AG04450 (cell line): ENCODE measurements at regions of chr7 and their contacts with region 1.

Region 1: DNA sequence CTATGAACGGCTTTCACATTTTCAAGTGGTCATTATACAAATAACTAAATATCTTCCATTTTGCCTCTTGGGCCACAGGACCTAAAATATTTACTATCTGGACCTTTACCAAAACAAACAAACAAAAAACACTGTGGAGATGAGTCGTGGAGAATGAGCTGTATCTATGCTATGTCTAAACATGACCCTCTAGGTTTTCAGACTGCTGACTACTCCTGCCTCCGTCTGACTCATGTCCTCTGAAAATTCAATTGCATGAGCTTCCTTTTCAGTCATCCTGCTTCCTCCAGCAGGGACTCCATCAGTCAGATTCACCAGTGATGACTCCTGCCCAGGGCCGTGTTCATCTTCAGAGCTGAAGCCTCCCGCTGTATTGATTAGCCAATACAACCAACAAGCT is 96.8 kb downstream of the COL28A1 start:
- DNase-seq: peak; percentile 95
- H3K4me3 ChIP-seq: no peak overlapping the region
- H3K27ac ChIP-seq: peak overlapping the region; percentile 86
- H3K27me3 ChIP-seq: no peaks in the 10 kb centered on the region
- CTCF ChIP-seq: 0 out of 2 replicates have a peak, but pooled peaks have one; percentile 24

Region 2: DNA sequence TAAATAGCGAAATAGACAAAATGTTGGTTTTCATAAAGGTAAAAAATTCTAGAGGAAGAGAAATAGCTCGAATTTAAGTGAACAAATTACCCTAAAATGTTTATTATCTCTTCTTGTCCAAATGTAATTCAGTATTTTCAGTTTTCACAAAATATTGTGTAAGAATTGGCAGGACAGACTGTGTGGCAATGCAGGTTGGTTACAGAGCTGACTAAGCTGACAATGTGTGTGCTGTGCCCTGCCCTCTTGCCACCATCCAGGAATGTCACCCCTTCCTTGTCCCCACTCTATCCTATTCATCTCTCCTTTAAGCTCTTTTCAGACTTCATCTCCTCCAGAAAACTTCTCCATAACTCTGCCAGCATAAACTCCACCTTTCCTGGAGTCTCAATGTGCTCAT is 50.7 kb after region 1 on chr7:
- CTCF ChIA-PET with region 1: no interaction called
- POLR2A ChIA-PET with region 1: interaction called, 13 read pairs
- DNase-seq: no peak
- H3K4me3 ChIP-seq: no peak overlapping the region
- H3K27ac ChIP-seq: no peak overlapping the region
- H3K27me3 ChIP-seq: no peaks in the 10 kb centered on the region
- CTCF ChIP-seq: no peak